Activated CD4-positive, alpha-beta memory T cell treated with anti-CD3 and anti-CD28 coated beads for 36 hours (primary cell): ENCODE measurements at regions of chr22 and their contacts with region 1.

Region 1: DNA sequence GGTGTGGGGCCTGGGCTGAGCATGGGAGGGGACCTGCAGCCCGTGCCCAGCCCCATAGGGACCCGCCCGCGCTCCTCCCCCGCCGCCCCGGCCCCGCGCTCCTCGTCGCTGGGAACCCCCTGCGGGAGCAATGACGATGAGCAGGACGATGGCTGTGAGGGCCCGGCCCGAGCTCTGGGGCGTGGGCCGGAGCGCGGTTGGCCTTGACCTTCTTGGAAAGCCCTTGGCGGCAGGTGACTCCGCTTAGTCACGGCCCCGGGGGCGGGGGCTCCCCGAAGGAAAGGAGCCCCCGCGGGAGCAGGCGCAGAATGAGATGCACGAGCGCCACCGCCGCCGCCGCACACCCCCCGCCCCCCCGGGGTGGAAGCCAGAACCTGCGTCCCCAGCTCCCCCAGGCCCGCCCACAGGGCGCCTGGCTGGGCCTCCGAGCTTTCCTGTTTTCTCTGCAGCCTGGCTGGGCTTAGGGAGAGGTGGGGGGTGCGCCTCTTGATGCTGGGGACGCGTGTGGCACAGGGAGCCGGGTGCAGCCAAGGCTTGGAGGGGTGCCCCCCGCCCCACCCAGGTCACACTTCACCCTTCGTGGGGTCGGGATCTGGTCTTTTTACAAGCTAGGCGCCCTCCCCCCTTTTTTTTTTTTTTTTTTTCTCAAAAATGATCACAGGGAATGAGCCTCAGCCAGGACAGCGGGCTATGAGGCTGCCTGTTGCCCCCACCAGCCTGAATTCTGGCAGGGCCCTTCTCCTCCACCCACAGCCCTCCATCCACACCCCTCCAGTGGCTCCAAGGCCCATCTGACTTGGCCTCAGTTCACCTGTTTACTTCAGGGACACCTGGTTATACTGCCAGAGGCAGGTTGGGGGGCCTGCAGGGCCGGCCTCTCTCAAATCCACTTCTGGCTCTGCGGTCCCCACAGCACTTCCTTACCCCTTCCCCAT is 17.9 kb downstream of the CRELD2 start:
- DNase-seq: peak; percentile 99
- H3K4me3 Mint-ChIP-seq: peak overlapping the region; percentile 51
- H3K27ac Mint-ChIP-seq: peak overlapping the region; percentile 91
- H3K4me1 Mint-ChIP-seq: peaks cover 36% of the 10 kb centered on the region
- H3K27me3 Mint-ChIP-seq: no peaks in the 10 kb centered on the region

Region 2: DNA sequence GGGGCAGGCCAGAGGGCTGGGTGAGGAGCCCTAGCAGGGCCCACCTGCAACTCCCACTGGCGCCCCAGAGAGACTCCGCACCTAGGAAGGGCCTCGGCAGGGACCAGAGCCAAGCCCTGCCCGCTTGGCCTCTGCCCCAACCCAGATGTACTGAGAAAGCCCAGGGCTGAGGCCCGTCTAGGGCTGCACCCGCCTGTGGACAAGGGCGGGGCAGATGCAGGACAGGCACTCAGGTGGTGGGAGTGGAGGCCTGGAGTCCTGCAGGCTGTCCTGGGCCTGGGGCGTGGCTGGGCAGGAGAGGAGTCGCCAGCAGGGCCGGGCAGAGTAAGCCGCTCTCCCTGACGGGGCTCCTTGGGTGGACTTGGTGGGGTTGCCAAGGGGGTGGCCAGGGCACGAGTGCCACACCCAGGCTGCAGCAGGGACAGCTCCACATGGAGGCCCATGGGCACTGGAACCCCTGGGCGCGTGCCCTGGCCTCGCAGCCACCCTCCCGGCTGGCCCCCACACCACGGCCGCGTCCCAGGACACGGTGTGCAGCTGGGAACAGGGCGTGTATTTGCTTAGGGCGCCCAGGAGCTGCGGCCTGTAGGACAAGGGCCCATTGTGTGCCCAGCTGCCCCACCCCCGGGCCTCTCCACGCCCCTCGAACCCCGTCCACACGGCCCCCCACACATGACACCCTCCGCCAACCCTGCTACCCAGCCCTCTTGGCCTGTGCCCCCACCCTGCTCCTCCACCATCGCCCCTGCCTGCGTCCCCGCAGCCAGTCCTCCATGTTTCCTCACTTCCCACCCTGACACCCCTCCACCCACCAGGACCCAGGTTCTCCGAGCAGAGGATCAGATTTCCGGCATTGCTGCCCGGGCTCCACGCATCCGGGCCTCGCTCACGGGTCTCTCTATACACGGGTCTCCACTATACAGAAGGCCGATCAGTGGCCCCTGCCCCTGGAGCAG is 13.0 kb after region 1 on chr22:
- CTCF ChIA-PET with region 1: no interaction called
- POLR2A ChIA-PET with region 1: no interaction called
- intact Hi-C with region 1: loop called (anchors 1 kb)
- DNase-seq: no peak
- H3K4me3 Mint-ChIP-seq: no peak overlapping the region
- H3K27ac Mint-ChIP-seq: no peak overlapping the region
- H3K4me1 Mint-ChIP-seq: peaks cover 9% of the 10 kb centered on the region
- H3K27me3 Mint-ChIP-seq: no peaks in the 10 kb centered on the region

Region 3: GRCh38 chr22:49970528-49971231 is 34.4 kb after region 1 on chr22:
- CTCF ChIA-PET with region 1: interaction called, 6 read pairs
- POLR2A ChIA-PET with region 1: interaction called, 13 read pairs
- intact Hi-C with region 1: loop called (anchors 2 kb)
- DNase-seq: peak; percentile 99
- H3K4me3 Mint-ChIP-seq: peak overlapping the region; percentile 80
- H3K27ac Mint-ChIP-seq: peak overlapping the region; percentile 93
- H3K4me1 Mint-ChIP-seq: peaks cover 34% of the 10 kb centered on the region
- H3K27me3 Mint-ChIP-seq: no peaks in the 10 kb centered on the region

Region 4: DNA sequence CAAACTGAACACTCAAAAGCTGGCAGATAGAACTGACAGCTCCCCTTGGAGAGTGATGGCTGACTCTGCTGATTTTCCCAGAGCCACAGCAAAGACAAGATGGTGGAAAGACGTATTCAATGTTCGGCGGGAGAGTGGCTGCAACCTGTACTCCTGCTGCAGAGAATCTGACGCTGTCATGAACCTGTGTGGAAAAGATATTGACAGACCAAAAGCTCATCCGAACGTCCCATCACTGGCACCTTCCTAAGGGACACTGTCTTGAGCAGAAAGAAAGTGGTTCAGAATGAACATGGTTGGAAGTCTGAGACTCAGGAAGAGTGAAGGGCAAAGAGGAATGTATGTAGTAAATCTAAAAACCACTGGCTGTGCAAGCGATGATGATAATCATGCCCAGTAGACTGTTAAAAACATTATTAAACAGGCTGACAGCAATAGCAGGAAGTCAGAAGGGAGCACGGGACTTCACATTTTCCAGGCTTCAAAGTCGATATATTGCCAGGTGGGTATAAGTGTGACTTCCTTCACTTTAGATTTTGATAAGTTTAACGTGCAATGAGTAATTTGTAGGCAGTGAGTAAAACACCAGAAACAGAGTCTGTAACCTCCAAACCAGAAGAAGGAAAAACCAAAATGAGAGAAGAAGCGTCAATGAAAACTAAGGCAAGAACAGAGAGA is 82.5 kb after region 1 on chr22:
- CTCF ChIA-PET with region 1: interaction called, 10 read pairs
- POLR2A ChIA-PET with region 1: interaction called, 8 read pairs
- intact Hi-C with region 1: loop called (anchors 1 kb)
- DNase-seq: peak; percentile 69
- H3K4me3 Mint-ChIP-seq: peak overlapping the region; percentile 74
- H3K27ac Mint-ChIP-seq: no peak overlapping the region
- H3K4me1 Mint-ChIP-seq: no peaks in the 10 kb centered on the region
- H3K27me3 Mint-ChIP-seq: no peaks in the 10 kb centered on the region

Region 5: DNA sequence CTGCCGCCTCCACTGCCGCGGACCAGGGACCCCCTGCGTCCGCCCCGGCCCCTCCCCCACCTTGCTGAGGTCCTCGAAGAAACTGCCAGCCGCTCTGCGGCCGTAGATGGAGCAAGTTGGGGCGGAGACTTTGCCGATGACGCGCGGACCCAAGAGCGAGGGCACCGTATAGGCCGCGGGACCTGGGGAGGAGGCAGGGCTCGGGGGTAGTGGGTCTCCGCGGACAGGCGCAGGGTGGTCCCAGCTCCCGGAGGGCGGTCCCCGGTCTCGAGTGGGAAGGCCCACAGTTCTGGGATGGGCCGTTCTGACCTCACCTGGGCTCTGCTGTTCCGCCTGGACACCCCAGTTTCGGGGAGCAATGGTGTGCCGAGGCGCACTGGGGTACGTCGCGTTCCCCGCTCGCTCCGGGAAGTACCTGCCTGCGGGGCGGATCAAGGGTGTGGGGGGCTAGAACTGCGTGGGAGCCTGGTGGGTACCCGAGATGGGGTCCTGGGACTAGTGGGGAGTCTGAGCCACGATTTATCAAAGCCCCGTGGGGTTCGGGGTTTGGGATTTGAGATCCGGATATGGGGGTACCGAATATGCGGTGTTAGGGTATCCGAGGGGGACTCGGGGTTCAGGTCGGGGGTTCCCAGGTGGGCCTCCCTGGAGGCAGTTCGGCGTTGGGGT is 594.7 kb after region 1 on chr22:
- CTCF ChIA-PET with region 1: no interaction called
- POLR2A ChIA-PET with region 1: no interaction called
- intact Hi-C with region 1: loop called (anchors 10 kb)
- DNase-seq: peak; percentile 92
- H3K4me3 Mint-ChIP-seq: peak overlapping the region; percentile 92
- H3K27ac Mint-ChIP-seq: peak overlapping the region; percentile 99
- H3K4me1 Mint-ChIP-seq: peaks cover 54% of the 10 kb centered on the region
- H3K27me3 Mint-ChIP-seq: no peaks in the 10 kb centered on the region